Breast epithelium (tissue), 4 donors: ENCODE measurements at regions of chr16 and their contacts with region 1.

Region 1: GRCh38 chr16:73864868-73865267 is 431.7 kb upstream of the PSMD7 start:
- DNase-seq: no peak
- H3K4me3 ChIP-seq: no peak overlapping the region
- H3K27ac ChIP-seq: no peak overlapping the region
- H3K4me1 ChIP-seq: no peaks in the 10 kb centered on the region
- H3K27me3 ChIP-seq: no peaks in the 10 kb centered on the region
- CTCF ChIP-seq: no peak
- POLR2A ChIP-seq: no peak

Region 2: GRCh38 chr16:73840728-73841127 is 24.1 kb before region 1 on chr16:
- intact Hi-C with region 1: loop called (anchors 1 kb)
- DNase-seq: no peak
- H3K4me3 ChIP-seq: no peak overlapping the region
- H3K27ac ChIP-seq: no peak overlapping the region
- H3K4me1 ChIP-seq: no peaks in the 10 kb centered on the region
- H3K27me3 ChIP-seq: no peaks in the 10 kb centered on the region
- CTCF ChIP-seq: no peak
- POLR2A ChIP-seq: no peak